Mammary epithelial cell (primary cell): ENCODE measurements at regions of chr1 and their contacts with region 1.

Region 1: GRCh38 chr1:248696261-248696660 is 6.3 kb downstream of the OR14I1 start:
- DNase-seq: no peak
- H3K4me3 ChIP-seq: no peak overlapping the region
- H3K27ac ChIP-seq: no peak overlapping the region
- H3K4me1 ChIP-seq: no peaks in the 10 kb centered on the region
- H3K27me3 ChIP-seq: no peaks in the 10 kb centered on the region
- CTCF ChIP-seq: peak in 1 of 2 donors; percentile 5

Region 2: GRCh38 chr1:248714248-248714647 is 18.0 kb after region 1 on chr1:
- CTCF ChIA-PET with region 1: no interaction called
- dilution Hi-C with region 1: no loop called
- in situ Hi-C with region 1: no loop called
- intact Hi-C with region 1: no loop called
- DNase-seq: no peak
- H3K4me3 ChIP-seq: no peak overlapping the region
- H3K27ac ChIP-seq: no peak overlapping the region
- H3K4me1 ChIP-seq: no peaks in the 10 kb centered on the region
- H3K27me3 ChIP-seq: no peaks in the 10 kb centered on the region
- CTCF ChIP-seq: no peak

Region 3: DNA sequence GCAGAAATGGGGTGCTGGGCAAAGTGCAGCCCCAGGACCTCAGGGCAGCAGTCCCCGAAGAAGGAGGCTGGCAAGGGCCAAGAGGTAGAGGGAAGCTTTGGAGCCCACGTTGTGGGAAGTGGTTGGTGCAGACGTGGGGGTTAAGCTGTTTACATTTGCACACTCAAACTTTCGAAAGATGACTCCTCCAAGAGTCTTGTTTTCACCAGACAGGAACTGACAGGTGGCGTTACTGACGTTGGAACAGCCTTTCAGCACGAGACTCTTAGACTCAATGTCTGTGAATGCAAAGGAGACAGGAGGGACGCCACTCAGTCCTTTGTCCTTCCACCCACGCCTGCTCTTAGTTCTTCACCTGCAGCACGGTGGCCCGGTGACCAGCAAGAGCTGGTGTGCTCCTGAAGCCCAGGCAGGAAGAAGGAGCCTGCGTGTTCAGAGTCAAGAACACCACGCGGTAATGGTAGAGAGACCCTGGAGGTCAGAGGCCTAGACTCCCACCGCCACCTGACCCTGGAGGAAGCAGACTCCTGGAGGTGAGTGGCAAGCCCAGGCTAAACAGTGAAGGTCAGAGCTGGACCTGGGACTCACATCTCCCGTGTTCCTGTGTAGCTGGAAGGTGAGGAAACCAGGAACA is 43.4 kb after region 1 on chr1:
- CTCF ChIA-PET with region 1: no interaction called
- dilution Hi-C with region 1: loop called (anchors 5 kb)
- in situ Hi-C with region 1: no loop called
- intact Hi-C with region 1: no loop called
- DNase-seq: no peak
- H3K4me3 ChIP-seq: no peak overlapping the region
- H3K27ac ChIP-seq: no peak overlapping the region
- H3K4me1 ChIP-seq: no peaks in the 10 kb centered on the region
- H3K27me3 ChIP-seq: no peaks in the 10 kb centered on the region
- CTCF ChIP-seq: no peak